T-cell (primary cell): ENCODE measurements at regions of chr19 and their contacts with region 1.

Region 1: DNA sequence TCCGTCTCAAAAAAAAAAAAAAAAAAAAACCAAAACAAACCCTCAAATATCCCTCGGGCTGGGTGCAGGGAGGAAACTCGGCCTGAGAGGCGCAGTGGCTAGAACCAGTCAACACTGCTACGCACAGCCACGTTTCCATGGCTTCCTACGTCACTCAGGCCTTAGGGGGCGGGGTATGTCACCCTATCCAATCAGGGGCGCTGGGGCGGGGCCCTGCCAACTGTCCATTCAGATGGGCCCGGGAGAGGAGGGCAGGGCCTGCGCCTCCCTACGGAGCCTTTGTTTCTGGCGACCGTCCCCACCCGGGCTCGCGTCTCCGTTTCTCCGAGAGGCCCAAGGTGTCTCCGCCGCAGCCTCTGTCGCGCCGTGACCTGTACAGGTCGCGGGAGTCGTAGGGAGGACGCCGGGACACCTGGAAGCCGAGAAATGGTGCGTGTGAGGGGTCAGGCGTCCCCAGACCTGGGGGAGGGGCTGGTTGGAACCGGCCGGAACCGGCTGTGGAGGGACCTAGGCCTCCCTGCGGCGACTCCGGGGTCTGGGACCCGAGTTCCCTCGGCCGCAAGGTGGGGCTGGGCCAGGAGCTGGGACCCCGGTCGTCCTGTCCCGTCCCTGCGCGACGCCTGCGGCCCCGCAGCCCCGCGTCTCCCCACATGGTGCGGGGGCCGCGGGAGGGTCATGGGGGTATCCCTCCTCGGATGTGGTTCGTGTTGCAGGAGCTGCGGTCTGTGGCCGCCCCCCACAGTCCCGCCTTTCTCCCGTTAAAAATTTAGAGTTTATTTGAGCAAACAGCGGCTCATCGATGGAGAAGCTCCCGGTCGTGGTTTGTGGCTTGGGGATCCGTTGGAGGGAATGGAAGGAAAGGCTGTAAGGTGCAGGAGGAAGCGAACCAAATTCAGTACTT is at the start of gene ZNF627:
- DNase-seq: peak; percentile 90 to 99 (median 97)
- ATAC-seq: peak; percentile 99 to 100 (median 100)
- H3K4me3 ChIP-seq: peak within 1 kb of the TSS; percentile 88 to 99
- H3K4me3 Mint-ChIP-seq: peak within 1 kb of the TSS; percentile 86 to 90 (median 88)
- H3K27ac ChIP-seq: peak within 1 kb of the TSS; percentile 91
- H3K27ac Mint-ChIP-seq: peak within 1 kb of the TSS; percentile 75 to 80
- H3K4me1 ChIP-seq: peaks cover 8 to 19% of the 10 kb centered on the region in 2 experiments
- H3K4me1 Mint-ChIP-seq: peaks cover 23 to 30% (median 27%) of the 10 kb centered on the region in 3 donors
- H3K27me3 ChIP-seq: no peaks in the 10 kb centered on the region
- H3K27me3 Mint-ChIP-seq: no peaks in the 10 kb centered on the region
- total RNA-seq, gene ZNF627: 5.6 to 11.9 (median 10.6) TPM

Region 2: DNA sequence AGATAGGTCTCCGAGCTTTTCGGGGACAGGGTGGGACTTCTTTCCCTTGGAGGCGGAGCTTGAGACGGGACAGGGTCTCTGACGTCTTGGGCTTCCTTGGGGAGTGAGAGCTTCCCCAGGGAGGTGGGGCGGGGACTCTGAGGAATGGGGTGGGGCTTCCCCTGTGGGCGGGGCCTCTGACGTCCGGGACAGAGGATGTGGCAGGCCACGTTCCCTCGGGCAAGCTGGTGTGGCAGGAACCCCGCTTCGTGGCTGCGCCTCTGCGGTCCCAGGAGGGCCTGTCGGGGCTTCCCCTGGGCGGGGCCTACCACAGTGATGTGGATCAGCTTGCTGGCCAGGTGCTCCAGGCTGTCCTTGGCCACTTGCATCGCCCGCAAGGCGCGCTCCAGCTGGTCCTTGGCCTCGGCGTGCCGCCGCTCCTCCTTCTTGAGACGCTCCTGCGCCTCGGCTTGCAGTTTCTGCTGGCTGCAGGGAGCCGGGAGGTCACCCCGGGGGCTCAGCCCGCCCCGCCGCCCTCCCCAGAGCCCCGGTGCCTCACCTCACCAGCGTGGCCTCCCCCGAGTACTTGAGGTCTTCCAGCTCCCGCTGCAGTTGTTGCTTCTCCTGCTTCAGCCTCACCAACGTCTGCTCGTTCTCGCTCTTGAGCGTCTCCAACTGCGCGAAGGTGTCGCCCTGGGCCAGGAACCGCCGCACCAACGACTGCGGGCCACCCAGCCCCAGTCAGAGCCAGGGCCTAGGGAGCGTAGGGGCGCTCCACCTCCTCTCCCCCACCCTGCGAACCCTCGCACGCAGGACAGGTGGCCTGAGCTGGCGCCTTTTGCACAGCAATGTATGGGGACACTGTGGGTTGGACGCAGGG is 175.1 kb before region 1 on chr19:
- CTCF ChIA-PET with region 1: no interaction called
- POLR2A ChIA-PET with region 1: interaction called in 1 of 2 experiments, 14 read pairs
- DNase-seq: peak; percentile 20 to 73 (median 51)
- ATAC-seq: peak; percentile 61 to 81 (median 72)
- H3K4me3 ChIP-seq: peak overlapping the region; percentile 40 to 42
- H3K4me3 Mint-ChIP-seq: peak overlapping the region; percentile 56 to 80 (median 76)
- H3K27ac ChIP-seq: no peak overlapping the region
- H3K27ac Mint-ChIP-seq: no peak overlapping the region
- H3K4me1 ChIP-seq: peaks cover 5 to 52% of the 10 kb centered on the region in 2 experiments
- H3K4me1 Mint-ChIP-seq: peaks cover 33 to 44% (median 38%) of the 10 kb centered on the region in 3 donors
- H3K27me3 ChIP-seq: peaks cover 5 to 82% of the 10 kb centered on the region in 2 experiments
- H3K27me3 Mint-ChIP-seq: peaks cover 47 to 55% of the 10 kb centered on the region in 2 donors

Region 3: DNA sequence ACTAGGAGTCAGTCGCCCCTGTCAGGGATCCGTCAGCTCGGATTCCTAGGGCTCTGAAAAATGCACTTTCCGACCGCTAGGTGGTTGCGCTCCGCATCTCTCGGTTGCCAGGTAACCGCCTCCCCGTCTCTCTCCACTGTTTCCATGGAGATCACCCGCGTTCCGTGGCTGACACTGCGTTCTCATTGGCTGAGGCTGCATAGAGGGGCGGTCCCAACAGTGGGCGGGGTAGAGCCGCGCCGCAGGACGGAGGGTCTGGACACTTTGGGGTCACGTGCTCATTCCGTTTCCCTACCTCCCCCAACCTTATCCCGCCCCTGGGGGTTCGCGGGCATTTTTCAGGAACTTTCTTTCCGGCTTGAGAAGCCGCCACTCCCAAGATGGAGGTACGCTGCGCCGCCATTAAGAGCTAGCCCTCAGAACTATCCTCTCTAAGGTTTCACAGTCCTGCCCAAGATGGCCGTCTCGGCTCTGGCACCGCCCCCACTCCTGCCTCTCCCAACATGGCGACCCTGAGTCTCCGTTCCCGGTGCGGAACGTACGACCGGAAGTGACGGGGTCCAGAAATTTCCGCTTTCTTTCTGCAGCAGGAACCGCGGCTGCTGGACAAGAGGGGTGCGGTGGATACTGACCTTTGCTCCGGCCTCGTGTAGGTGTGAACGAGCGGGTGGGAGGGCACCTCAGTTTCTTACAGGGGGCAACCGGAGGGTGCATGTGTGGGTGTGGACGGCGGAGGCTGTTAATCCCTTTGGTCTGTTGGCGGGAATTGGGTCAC is 162.2 kb before region 1 on chr19 and contains the starts of genes ODAD3 and PRKCSH:
- CTCF ChIA-PET with region 1: no interaction called
- POLR2A ChIA-PET with region 1: no interaction called
- DNase-seq: peak; percentile 91 to 99 (median 96)
- ATAC-seq: peak; percentile 93 to 97 (median 95)
- H3K4me3 ChIP-seq: peak within 1 kb of the TSS; percentile 92 to 96
- H3K4me3 Mint-ChIP-seq: peak within 1 kb of the TSS; percentile 98 to 99 (median 99)
- H3K27ac ChIP-seq: peak within 1 kb of the TSS; percentile 75
- H3K27ac Mint-ChIP-seq: peak within 1 kb of the TSS; percentile 94 to 98
- H3K4me1 ChIP-seq: peaks cover 6 to 27% of the 10 kb centered on the region in 2 experiments
- H3K4me1 Mint-ChIP-seq: peaks cover 23 to 31% (median 25%) of the 10 kb centered on the region in 3 donors
- H3K27me3 ChIP-seq: peaks cover 0 to 9% of the 10 kb centered on the region in 2 experiments
- H3K27me3 Mint-ChIP-seq: peaks cover 0 to 6% of the 10 kb centered on the region in 2 donors
- total RNA-seq, gene ODAD3: 0.20 TPM in 1 of 5 donors, not detected in the others
- total RNA-seq, gene PRKCSH: 248 to 382 (median 334) TPM

Region 4: DNA sequence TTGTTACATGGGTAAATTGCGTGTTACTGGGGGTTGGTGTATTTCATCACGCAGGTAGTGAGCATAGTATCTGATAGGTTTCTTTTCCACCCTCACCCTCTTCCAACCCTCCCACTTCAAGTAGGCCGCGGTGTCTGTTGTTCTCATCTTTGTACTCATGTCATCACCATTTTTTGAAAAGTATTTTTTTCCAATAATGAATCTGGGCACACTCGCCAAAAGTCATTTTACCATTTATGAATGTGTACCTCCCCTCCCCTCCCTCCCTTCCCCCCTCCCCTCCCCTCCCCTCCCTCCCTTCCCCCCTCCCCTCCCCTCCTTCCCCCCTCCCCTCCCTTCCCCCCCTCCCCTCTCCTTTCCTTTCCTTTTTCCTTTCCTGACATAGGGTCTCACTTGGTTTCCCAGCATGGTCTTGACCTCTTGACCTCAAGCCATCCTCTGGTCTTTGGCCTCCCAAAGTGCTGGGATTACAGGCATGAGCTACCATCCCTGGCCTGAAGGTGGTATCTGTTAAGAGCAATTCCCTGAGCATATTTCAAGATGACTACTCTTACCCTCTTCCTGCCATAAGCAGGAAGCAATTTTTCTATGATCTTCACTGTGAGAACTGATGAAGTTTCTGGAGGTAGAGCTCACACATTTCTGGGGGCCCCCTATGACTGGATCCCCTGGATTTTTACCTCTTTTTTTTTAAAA is 15.5 kb after region 1 on chr19:
- CTCF ChIA-PET with region 1: no interaction called
- POLR2A ChIA-PET with region 1: no interaction called
- DNase-seq: no peak
- ATAC-seq: no peak
- H3K4me3 ChIP-seq: no peak overlapping the region
- H3K4me3 Mint-ChIP-seq: no peak overlapping the region
- H3K27ac ChIP-seq: no peak overlapping the region
- H3K27ac Mint-ChIP-seq: no peak overlapping the region
- H3K4me1 ChIP-seq: no peaks in the 10 kb centered on the region
- H3K4me1 Mint-ChIP-seq: peaks cover 5 to 7% (median 6%) of the 10 kb centered on the region in 3 donors
- H3K27me3 ChIP-seq: no peaks in the 10 kb centered on the region
- H3K27me3 Mint-ChIP-seq: no peaks in the 10 kb centered on the region

Region 5: GRCh38 chr19:12603714-12604113 is 1006.3 kb after region 1 on chr19:
- CTCF ChIA-PET with region 1: no interaction called
- POLR2A ChIA-PET with region 1: interaction called in 1 of 2 experiments, 13 read pairs
- DNase-seq: peak in 28 of 35 experiments; percentile 10 to 70 (median 34)
- ATAC-seq: peak; percentile 70 to 99 (median 76)
- H3K4me3 ChIP-seq: no peak overlapping the region
- H3K4me3 Mint-ChIP-seq: peak overlapping the region in 1 of 3 donors; percentile 34
- H3K27ac ChIP-seq: no peak overlapping the region
- H3K27ac Mint-ChIP-seq: peak overlapping the region in 1 of 2 donors; percentile 22
- H3K4me1 ChIP-seq: peaks cover 4 to 14% of the 10 kb centered on the region in 2 experiments
- H3K4me1 Mint-ChIP-seq: peaks cover 10 to 22% (median 11%) of the 10 kb centered on the region in 3 donors
- H3K27me3 ChIP-seq: no peaks in the 10 kb centered on the region
- H3K27me3 Mint-ChIP-seq: no peaks in the 10 kb centered on the region